ENCODE measurements at regions of chr12 and their contacts with region 1.

Region 1: DNA sequence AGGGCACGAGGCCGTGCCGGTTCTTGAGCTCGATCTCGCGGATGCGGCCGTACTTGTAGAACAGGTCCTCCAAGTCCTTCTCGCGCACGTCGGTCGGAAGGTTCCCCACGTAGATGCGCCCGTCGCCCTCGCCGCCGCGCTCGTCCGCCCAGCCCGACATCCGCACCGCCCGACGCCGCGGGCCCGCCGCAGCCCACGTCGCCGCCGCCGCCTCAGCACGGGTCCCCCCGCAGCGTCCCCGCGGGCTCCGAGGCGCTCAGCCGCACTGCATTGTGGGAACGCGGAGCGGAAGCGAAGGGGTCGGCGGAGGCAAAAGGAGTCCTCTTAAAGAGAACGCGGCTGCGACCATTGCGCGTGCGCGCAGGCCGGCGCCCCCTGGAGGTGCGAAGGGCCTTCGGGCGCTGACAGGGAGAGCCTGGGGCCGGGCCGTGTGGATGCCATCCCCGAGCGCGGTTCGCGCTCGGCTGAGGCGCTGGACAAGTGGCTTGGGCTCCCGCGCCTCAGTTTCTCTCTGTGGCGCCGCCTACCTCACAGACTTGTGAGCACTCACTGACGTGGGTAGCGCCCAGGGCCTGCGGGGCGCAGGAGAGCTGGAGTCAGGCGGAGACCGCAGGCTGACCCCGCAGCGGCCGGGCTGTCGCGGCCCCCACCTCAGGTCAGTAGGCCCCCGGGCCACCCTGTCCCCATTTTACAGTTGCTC is at the start of gene SRSF9:
- DNase-seq: peak; percentile 97
- ATAC-seq: peak; percentile 94
- H3K4me3 Mint-ChIP-seq: peak within 1 kb of the TSS; percentile 77
- H3K27ac Mint-ChIP-seq: peak within 1 kb of the TSS; percentile 85
- H3K4me1 Mint-ChIP-seq: peaks cover 42% of the 10 kb centered on the region
- H3K27me3 Mint-ChIP-seq: no peaks in the 10 kb centered on the region
- CTCF ChIP-seq: peak; percentile 94
- total RNA-seq, gene SRSF9: 225 to 236 TPM

Region 2: DNA sequence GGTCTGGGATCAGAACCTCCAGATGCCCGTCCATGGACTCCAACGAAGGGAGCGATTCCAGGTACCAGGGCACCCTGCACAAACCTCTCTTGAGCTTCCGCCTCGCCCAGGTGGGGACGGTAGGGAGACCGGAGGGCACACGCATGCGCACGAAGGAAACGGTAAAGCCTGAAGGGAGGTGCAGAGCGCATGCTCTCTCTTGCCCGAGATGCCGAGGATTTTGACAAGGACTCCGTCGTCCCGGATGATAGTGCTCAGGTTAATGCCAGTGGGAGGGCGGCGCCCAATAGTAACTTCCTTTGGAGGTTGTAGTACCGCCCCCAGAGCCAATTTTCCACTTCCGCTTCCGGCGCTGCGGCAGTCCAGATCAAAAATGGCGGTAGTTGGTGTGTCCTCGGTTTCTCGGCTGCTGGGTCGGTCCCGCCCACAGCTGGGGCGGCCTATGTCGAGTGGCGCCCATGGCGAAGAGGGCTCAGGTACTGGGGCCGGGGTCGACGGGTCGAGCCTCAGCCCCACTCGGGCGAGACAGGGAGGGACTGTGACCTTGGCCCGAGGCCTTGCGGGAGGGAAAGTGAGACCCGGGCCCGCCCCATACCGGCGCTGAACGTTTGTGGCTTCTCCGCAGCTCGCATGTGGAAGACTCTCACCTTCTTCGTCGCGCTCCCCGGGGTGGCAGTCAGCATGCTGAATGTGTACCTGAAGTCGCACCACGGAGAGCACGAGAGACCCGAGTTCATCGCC is 31.7 kb before region 1 on chr12 and contains the start of gene COX6A1:
- CTCF ChIA-PET with region 1: interaction called, 20 read pairs
- POLR2A ChIA-PET with region 1: interaction called, 18 read pairs
- intact Hi-C with region 1: no loop called
- DNase-seq: peak; percentile 99
- ATAC-seq: peak; percentile 96
- H3K4me3 Mint-ChIP-seq: peak within 1 kb of the TSS; percentile 85
- H3K27ac Mint-ChIP-seq: peak within 1 kb of the TSS; percentile 96
- H3K4me1 Mint-ChIP-seq: peaks cover 28% of the 10 kb centered on the region
- H3K27me3 Mint-ChIP-seq: no peaks in the 10 kb centered on the region
- CTCF ChIP-seq: no peak
- total RNA-seq, gene COX6A1: 396 to 406 TPM

Region 3: DNA sequence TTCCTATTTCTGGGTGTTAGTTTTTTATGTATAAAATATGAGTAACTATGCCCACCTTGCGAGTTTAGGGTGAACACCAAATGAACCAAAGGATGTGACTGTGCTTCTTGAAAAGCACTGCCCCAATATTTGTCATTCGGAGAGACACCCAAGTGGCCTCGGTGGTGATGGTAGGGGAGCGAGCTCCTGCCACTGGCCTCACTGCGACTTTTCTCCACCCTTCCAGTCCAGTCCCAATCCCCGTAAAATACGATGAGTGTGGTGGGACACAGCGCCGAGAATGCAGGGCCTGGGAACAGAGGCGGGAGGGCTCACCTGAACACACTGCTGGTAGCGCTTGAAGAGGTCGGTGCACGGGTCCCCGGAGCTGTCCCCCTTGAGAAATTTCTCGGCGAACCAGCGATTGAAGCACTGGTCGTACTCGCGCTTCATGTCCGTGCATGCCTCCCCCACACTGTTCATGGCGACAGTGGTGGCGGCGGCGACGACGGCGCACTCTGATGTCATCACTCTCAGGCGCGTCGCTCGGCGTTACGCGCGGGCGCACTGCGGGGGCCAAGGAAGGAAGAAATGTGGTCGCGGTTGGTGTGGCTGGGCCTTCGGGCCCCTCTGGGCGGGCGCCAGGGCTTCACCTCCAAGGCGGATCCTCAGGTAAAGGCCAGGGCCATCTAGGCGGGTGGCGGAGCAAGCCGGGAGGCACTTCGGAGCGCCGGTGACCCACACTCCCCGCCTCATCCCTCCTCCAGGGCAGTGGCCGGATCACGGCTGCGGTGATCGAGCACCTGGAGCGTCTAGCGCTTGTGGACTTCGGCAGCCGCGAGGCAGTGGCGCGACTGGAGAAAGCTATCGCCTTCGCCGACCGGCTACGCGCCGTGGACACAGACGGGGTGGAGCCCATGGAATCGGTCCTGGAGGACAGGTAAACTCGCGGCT is 23.4 kb before region 1 on chr12 and contains the starts of genes GATC and TRIAP1:
- CTCF ChIA-PET with region 1: interaction called, 110 read pairs
- POLR2A ChIA-PET with region 1: interaction called, 18 read pairs
- intact Hi-C with region 1: no loop called
- DNase-seq: peak; percentile 91
- ATAC-seq: peak; percentile 95
- H3K4me3 Mint-ChIP-seq: peak within 1 kb of the TSS; percentile 94
- H3K27ac Mint-ChIP-seq: peak within 1 kb of the TSS; percentile 97
- H3K4me1 Mint-ChIP-seq: peaks cover 41% of the 10 kb centered on the region
- H3K27me3 Mint-ChIP-seq: no peaks in the 10 kb centered on the region
- CTCF ChIP-seq: no peak
- total RNA-seq, gene GATC: 32.2 to 39.3 TPM
- total RNA-seq, gene TRIAP1: 43.1 to 45.1 TPM

Region 4: GRCh38 chr12:120453977-120454376 is 15.6 kb before region 1 on chr12:
- CTCF ChIA-PET with region 1: interaction called, 110 read pairs
- POLR2A ChIA-PET with region 1: interaction called, 26 read pairs
- intact Hi-C with region 1: no loop called
- DNase-seq: peak; percentile 32
- ATAC-seq: peak; percentile 97
- H3K4me3 Mint-ChIP-seq: no peak overlapping the region
- H3K27ac Mint-ChIP-seq: peak overlapping the region; percentile 11
- H3K4me1 Mint-ChIP-seq: peaks cover 15% of the 10 kb centered on the region
- H3K27me3 Mint-ChIP-seq: no peaks in the 10 kb centered on the region
- CTCF ChIP-seq: peak; percentile 71

Region 5: DNA sequence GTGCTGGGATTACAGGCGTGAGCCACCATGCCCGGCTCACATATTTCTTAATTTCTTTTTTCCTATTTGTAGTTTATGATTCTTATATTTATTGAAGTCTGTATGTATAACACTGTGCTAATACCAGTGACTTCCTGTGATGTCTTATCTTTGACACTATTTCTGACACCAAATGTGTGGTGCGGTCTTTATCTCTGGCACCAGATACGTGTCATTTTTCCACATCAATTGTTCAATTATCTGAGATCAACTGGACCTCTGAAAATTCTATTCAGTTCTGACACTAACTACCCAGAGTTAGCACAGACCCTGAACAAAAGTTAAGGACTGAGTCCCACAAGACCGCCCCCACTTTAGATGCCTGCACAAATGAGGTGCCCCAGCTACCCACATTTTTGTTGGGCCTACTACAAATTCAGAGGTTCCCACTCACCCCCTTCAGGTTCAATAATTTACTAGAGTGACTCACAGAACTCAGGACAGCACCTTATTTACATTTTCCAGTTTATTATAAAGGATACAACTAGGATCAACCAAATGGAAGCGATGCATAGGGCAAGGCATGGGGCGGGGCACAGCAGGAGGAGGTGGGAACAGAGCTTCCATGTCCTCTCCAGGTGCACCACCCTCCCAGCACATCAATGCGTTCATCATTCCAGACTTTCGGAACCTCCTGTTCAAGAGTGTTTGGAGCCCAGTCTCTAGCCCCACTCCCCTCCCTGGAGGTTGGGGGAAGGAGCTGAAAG is 11.6 kb after region 1 on chr12:
- CTCF ChIA-PET with region 1: interaction called, 3 read pairs
- POLR2A ChIA-PET with region 1: interaction called, 19 read pairs
- intact Hi-C with region 1: no loop called
- DNase-seq: no peak
- ATAC-seq: peak; percentile 42
- H3K4me3 Mint-ChIP-seq: no peak overlapping the region
- H3K27ac Mint-ChIP-seq: peak overlapping the region; percentile 49
- H3K4me1 Mint-ChIP-seq: peaks cover 9% of the 10 kb centered on the region
- H3K27me3 Mint-ChIP-seq: no peaks in the 10 kb centered on the region
- CTCF ChIP-seq: no peak

Region 6: DNA sequence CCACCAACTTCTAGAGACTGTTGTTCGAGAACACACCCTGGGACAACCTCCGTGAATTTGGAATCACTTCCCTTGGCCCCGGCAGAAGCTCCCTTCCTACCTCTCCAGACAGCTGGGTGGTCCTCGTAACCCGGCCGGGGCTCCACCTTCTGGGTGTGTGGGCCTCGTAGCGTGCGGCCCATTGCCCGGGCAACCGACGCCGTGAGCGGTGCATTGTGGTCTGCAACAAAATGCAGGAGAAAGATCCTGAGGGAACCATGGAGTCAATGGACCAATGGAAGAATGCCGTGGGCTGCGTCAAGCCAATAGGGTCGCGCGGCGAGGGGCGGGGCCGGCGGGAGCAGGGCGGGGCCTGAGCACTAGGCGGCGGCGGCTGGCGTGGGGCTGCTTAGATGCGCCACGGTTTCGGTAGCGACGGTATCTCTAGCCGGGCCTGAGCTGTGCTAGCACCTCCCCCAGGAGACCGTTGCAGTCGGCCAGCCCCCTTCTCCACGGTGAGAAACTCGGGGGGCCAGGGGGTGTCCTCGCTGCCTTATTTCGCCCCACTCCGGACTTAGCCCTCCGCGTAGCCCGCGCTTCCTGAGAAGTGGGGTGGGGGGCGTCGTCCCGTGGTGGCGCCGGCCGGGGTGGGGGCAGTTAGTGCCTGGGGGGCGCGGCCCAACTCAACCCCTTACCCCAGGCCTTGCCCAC is 26.3 kb after region 1 on chr12 and contains the start of gene DYNLL1:
- CTCF ChIA-PET with region 1: interaction called, 25 read pairs
- POLR2A ChIA-PET with region 1: interaction called, 8 read pairs
- intact Hi-C with region 1: no loop called
- DNase-seq: peak; percentile 98
- ATAC-seq: peak; percentile 98
- H3K4me3 Mint-ChIP-seq: peak within 1 kb of the TSS; percentile 91
- H3K27ac Mint-ChIP-seq: peak within 1 kb of the TSS; percentile 84
- H3K4me1 Mint-ChIP-seq: peaks cover 25% of the 10 kb centered on the region
- H3K27me3 Mint-ChIP-seq: no peaks in the 10 kb centered on the region
- CTCF ChIP-seq: no peak
- total RNA-seq, gene DYNLL1: 126 to 137 TPM

Measured in activated CD8-positive, alpha-beta T cell treated with anti-CD3 and anti-CD28 coated beads for 36 hours (primary cell).